ENCODE measurements at regions of chr20 and their contacts with region 1.

Region 1: DNA sequence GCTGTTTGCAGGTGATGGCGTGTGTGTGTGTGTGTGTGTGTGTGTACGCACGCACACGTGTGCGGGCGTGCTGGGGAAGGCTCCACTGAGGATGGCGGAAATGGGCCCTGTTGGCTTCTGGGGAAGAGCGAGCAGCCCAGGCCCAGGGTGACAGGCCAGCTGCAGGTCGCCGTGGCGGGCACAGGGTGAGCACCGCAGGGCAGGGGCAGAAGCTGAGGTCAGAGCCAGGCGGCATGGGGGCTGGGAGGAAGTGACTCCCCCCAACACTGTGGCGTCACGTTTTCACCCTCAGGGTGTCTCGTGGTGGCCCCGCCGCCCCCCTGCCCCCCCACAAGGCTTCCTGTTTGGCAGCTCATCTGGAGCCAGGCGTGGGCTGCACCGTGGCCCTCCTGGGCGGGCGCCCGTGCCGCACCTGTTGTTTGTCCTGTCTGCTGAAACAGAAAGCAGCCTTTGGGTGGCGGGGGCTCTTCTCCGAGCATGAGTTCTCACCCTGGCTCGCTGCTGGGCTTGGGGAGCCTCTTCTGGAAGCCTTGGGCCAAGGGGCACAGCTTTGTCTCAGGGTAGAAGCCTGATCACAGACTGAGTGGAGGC is 7.1 kb downstream of the RBM38 start:
- DNase-seq: peak; percentile 85
- CTCF ChIP-seq: no peak

Region 2: GRCh38 chr20:57179265-57179664 is 219.1 kb before region 1 on chr20:
- CTCF ChIA-PET with region 1: no interaction called
- POLR2A ChIA-PET with region 1: no interaction called
- DNase-seq: no peak
- CTCF ChIP-seq: no peak

Region 3: GRCh38 chr20:57412347-57413029 is 14.2 kb after region 1 on chr20:
- CTCF ChIA-PET with region 1: interaction called, 8 read pairs
- POLR2A ChIA-PET with region 1: interaction called, 15 read pairs
- DNase-seq: no peak
- CTCF ChIP-seq: no peak

Measured in GM10248 (cell line).